ENCODE measurements at regions of chr10 and their contacts with region 1.

Region 1: DNA sequence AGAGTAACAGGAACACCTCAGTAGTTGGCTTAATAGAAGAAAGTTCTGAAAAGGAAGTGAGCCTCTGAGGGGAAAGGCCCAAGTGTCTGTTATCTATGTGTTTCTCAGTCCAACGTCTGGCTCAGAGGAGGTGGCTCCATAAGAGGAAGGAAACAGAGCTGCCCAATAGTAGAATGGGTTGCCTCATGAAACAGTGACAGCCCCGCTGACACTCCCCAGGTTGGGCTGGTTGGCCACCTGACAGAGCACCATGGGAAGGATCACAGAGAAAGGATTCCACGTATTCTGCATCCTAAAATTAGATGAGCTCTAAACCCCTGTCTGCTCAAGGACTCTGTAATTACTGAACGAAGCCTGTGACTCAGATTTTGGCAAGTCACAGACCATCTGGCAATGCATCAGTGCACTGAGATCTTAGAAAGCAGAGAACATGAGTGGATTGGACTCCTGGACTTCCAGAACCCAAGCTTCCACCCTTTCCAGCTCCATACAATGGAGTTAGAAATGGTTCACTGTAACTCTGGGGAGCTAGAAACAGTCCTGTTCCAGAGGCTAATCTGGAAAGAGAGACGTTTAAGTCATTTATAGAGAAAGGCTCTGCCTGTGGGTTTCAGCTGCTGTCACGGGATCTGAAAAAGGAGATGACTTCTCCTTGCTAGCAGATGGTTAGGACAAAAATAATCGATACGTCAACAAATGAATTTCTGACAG is 2.9 kb downstream of the PKD2L1 start:
- DNase-seq: peak; percentile 73
- ATAC-seq: peak; percentile 99
- H3K4me3 Mint-ChIP-seq: no peak overlapping the region
- H3K27ac Mint-ChIP-seq: peak overlapping the region; percentile 81
- H3K4me1 Mint-ChIP-seq: peaks cover 17% of the 10 kb centered on the region
- H3K27me3 Mint-ChIP-seq: no peaks in the 10 kb centered on the region
- CTCF ChIP-seq: no peak

Region 2: GRCh38 chr10:100043801-100044200 is 283.4 kb before region 1 on chr10:
- CTCF ChIA-PET with region 1: no interaction called
- POLR2A ChIA-PET with region 1: no interaction called
- intact Hi-C with region 1: no loop called
- DNase-seq: no peak
- ATAC-seq: no peak
- H3K4me3 Mint-ChIP-seq: no peak overlapping the region
- H3K27ac Mint-ChIP-seq: no peak overlapping the region
- H3K4me1 Mint-ChIP-seq: no peaks in the 10 kb centered on the region
- H3K27me3 Mint-ChIP-seq: peaks cover 7% of the 10 kb centered on the region
- CTCF ChIP-seq: no peak

Region 3: DNA sequence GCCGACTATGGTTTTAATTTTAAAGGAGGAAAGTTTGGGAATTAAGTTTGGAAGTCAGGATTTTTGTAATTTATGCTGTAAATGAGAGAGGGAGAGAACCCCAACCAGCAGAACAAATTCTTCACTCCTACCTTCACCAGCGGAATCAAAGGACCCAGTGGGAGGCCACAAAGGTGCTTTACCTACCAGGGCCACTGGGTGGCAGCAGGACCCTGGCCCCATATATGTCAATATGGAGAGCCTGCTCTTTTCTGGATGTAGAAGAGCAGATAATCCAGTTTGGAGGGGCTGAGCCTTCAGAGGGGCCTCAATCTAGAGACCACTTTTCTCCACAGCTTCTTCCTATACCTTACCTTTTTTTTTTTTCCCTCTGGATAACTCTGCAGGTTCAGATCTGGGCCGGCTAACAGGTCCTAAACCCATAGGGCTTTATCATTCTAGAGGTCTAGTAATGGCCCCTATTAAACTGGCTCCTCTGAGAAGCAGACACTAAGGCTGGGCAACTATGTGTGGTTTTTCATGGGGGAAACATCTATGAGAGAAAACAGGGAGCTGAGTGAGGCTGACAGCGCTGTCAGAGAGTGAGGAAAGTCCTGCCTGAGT is 11.4 kb after region 1 on chr10:
- CTCF ChIA-PET with region 1: interaction called, 17 read pairs
- POLR2A ChIA-PET with region 1: no interaction called
- intact Hi-C with region 1: no loop called
- DNase-seq: peak; percentile 90
- ATAC-seq: peak; percentile 92
- H3K4me3 Mint-ChIP-seq: no peak overlapping the region
- H3K27ac Mint-ChIP-seq: peak overlapping the region; percentile 44
- H3K4me1 Mint-ChIP-seq: peaks cover 2% of the 10 kb centered on the region
- H3K27me3 Mint-ChIP-seq: peaks cover 1% of the 10 kb centered on the region
- CTCF ChIP-seq: peak; percentile 91